Ascending aorta (tissue), 2 donors: ENCODE measurements at regions of chr16 and their contacts with region 1.

Region 1: DNA sequence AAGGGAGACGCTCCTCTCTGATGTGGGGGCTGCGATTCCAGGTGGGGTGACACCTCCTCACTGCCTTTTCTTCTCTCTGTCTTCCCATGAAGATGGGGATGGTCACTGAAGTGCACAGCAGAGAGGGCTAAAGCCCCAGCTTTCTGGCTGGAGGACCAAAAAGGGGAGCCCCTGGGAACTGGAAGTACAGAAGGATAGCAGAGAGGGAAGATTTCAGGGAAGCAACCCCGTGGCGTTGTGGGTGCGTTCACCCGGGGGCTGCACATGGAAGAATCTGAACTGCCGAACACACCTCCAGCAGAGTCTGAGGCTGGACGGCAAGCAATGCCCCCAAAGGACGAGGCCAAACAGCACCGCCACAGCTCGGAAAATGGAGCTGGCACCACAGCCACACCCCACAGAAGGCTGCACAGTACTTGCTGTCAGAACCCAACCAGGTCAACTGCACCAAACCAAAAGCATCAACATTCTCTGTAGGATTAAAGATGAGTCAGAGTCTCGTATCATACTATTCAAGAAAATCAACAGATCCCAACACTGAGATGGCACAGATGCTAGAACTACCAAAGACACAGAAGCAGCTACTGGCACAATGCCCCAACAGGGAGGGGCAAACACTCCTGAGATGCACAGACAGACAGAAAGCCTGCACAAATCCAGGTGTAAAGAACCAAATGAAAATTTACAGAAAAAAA is 49.9 kb downstream of the MAP1LC3B start:
- DNase-seq: no peak
- H3K4me3 ChIP-seq: no peak overlapping the region
- H3K27ac ChIP-seq: no peak overlapping the region
- H3K4me1 ChIP-seq: peaks cover 0 to 9% of the 10 kb centered on the region in 2 donors
- H3K27me3 ChIP-seq: no peaks in the 10 kb centered on the region
- CTCF ChIP-seq: no peak

Region 2: DNA sequence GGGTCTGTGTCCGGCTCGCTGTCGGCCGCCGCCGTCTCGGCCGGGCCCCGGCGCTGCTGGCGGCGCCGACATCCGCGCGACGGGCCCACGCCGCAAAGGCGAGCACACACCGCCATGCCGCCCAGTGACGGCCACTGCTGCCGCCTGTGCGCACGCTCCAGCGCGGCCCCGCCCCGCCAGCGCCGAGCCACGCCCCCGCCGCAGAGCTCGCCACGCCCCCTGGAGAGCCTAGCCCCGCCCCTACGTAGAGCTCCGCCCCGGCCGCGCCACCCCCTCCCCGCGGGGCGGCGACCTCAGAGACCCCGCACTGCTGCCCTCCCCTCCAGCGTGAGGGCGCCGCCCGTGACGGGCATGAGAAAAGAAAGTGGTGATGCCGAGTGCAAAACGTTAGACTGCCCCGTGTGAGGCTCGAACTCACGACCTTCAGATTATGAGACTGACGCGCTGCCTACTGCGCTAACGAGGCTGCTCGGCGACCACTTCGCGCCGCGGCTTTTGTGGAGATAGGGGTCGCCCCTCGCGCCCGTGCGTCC is 58.3 kb before region 1 on chr16 and contains the start of gene FBXO31:
- intact Hi-C with region 1: no loop called
- DNase-seq: peak in 1 of 2 donors; percentile 90
- H3K4me3 ChIP-seq: peak within 1 kb of the TSS; percentile 69 to 87
- H3K27ac ChIP-seq: peak within 1 kb of the TSS; percentile 91 to 93
- H3K4me1 ChIP-seq: peaks cover 16 to 41% of the 10 kb centered on the region in 2 donors
- H3K27me3 ChIP-seq: no peaks in the 10 kb centered on the region
- CTCF ChIP-seq: no peak
- total RNA-seq, gene FBXO31: 224 TPM

Region 3: DNA sequence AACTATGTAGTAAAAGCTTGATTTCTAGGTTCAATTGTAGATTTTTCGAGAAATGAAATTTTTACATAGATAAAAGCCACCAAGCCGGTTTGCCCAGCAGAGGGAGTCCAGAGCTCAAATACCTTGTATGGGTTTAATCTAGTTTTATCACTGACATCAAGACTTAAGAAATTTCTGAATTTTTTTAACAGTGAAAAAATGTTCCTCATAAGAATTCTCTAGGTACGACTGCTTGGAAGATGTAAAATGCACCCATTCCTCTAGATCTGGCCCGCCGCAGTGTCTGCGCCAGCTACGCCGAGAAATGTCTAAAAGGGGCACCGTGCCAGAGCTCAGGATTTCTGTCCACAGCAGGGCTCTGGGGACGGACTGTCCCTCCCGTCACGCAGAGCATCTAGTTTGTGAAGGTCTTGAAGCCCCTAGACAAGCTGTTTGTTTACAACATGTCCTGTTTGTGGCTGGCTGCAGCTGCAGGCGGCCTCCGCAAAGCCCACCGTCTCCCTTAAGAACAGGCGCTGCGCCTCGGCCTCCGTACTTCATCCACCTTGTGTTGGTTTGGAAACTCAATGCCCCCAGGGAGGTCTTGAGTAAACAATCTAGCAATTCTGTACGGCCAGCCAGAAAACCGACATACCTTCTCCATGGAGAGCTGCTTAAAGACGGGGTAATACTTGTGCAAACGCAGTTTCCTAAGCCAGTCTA is 25.1 kb before region 1 on chr16:
- intact Hi-C with region 1: loop called (anchors 2 kb)
- DNase-seq: no peak
- H3K4me3 ChIP-seq: no peak overlapping the region
- H3K27ac ChIP-seq: no peak overlapping the region
- H3K4me1 ChIP-seq: no peaks in the 10 kb centered on the region
- H3K27me3 ChIP-seq: no peaks in the 10 kb centered on the region
- CTCF ChIP-seq: peak; percentile 32 to 70 (median 57)